H1 (cell line): ENCODE measurements at regions of chr2 and their contacts with region 1.

Region 1: DNA sequence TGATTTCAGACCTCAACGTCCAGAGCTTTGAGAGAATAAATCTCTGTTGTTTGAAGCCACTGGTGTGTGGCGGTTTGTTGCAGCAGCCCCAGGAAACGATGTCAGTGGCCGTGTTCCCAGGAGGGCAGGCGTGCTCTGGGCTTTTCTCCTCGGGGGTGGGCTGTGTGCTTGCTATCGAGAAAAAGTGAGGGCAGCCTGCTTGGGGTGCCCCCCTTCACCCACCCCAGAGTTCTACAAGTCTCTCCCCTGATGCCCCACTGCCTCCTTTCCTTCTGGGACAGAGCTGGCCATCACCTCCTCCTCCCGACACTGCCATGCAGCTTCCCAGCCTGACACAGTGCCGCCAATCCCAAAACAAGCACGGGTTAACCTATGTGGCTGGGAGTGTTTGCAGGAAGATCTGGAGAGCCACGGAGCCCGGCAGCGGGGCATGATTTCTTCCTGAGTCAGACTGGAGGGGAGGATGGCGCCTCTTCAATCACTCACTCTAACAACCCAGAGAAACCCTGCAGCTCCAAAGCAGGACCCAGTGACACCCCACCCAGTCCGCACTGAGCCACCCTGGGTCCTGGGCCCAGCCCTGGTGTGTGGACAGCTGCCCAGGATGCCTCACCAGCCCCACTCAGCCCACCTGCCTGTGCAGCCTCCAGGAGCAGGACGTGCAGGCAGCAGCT is 213.7 kb upstream of the RAB6C start:
- DNase-seq: no peak
- H3K4me3 ChIP-seq: no peak overlapping the region
- H3K27ac ChIP-seq: no peak overlapping the region
- H3K4me1 ChIP-seq: peaks cover 0 to 6% (median 0%) of the 10 kb centered on the region in 4 experiments; a peak in 2 of 7 replicates
- H3K27me3 ChIP-seq: no peaks in the 10 kb centered on the region
- CTCF ChIP-seq: no peak
- EP300 ChIP-seq: no peak
- POLR2A ChIP-seq: no peak
- RAD21 ChIP-seq: no peak

Region 2: DNA sequence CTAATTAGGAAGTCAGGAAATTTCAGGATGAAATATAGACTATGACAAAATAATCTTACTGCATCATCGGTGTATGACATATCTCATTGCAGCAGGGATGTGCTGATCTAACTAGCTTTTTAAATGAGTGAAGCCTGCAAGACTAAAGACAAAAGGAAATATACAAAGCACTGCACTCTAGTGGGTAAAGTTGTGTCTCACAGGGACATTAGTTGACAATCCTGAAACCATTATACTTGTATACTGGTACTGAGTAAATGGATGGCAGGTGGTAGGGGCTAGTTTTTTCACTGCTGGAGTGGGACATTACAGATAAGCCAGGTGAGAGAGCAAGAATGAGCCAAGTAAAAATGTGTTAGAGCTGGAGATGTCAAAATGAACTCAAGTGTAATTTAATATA is 103.9 kb before region 1 on chr2:
- CTCF ChIA-PET with region 1: no interaction called
- POLR2A ChIA-PET with region 1: no interaction called
- DNase-seq: no peak
- H3K4me3 ChIP-seq: no peak overlapping the region
- H3K27ac ChIP-seq: no peak overlapping the region
- H3K4me1 ChIP-seq: no peaks in the 10 kb centered on the region
- H3K27me3 ChIP-seq: no peaks in the 10 kb centered on the region
- CTCF ChIP-seq: peak in 1 of 3 experiments; percentile 14; a peak in 2 of 4 replicates
- EP300 ChIP-seq: no peak
- POLR2A ChIP-seq: no peak
- RAD21 ChIP-seq: peak; percentile 16 to 39; a peak in 3 of 4 replicates

Region 3: DNA sequence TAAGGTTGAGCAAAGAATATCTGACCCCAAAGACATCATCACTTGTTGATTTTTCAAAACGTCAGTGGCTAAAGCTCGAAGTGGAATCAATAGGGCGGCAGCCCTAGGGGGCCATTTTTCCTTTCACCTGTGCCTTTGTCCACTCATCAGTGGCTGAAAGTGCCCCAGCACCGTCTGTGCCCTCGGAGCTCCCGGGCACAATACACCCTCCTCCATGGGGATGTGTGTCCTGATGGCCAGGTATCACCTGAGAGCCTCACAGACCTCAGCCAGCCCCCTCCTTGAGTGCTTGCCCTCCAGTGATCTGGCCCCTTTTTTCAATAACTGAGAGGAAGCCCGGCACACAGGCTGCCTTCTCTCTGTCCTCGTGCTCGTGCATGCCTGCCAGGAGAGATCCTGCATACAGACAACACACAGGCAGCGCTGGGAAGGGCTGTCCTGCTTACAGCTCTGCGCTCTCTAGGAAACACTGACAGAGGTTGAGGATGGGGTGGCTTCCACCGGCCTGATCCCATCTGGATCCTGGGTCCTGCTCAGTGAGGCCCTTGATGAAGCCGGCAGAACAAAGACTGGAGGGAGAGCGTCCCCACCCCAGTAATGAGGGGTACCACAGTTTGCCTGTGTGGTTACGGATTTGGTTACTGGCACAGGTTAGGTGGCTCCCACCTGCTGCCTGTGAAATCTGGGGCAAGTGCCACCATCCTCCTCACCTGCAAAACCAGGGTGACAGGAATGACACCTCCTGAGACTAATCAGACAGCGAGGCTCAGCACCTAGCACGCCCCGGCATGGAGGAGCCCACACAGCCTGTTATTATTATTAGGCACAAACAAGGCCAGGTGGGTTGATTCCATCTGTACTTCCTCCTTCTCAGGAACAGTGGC is 16.2 kb after region 1 on chr2:
- CTCF ChIA-PET with region 1: interaction called, 13 read pairs
- POLR2A ChIA-PET with region 1: interaction called, 4 read pairs
- DNase-seq: peak in 1 of 2 experiments; percentile 43
- H3K4me3 ChIP-seq: no peak overlapping the region
- H3K27ac ChIP-seq: no peak overlapping the region
- H3K4me1 ChIP-seq: peaks cover 0 to 7% (median 3%) of the 10 kb centered on the region in 4 experiments; a peak in 4 of 7 replicates
- H3K27me3 ChIP-seq: no peaks in the 10 kb centered on the region
- CTCF ChIP-seq: no peak
- EP300 ChIP-seq: no peak
- POLR2A ChIP-seq: no peak
- RAD21 ChIP-seq: no peak